ENCODE measurements at regions of chr1 and their contacts with region 1.

Region 1: GRCh38 chr1:10591010-10591409 is 116.3 kb downstream of the PEX14 start:
- DNase-seq: no peak
- H3K4me3 ChIP-seq: no peak overlapping the region
- H3K27ac ChIP-seq: no peak overlapping the region
- H3K4me1 ChIP-seq: peaks cover 0 to 26% (median 16%) of the 10 kb centered on the region in 4 donors
- H3K27me3 ChIP-seq: no peaks in the 10 kb centered on the region
- CTCF ChIP-seq: no peak
- EP300 ChIP-seq: no peak
- POLR2A ChIP-seq: no peak

Region 2: GRCh38 chr1:10540277-10541005 is 50.6 kb before region 1 on chr1:
- intact Hi-C with region 1: loop called (anchors 5 kb)
- DNase-seq: peak; percentile 73
- H3K4me3 ChIP-seq: no peak overlapping the region
- H3K27ac ChIP-seq: peak overlapping the region; percentile 50 to 77 (median 64)
- H3K4me1 ChIP-seq: peaks cover 0 to 31% (median 24%) of the 10 kb centered on the region in 4 donors
- H3K27me3 ChIP-seq: no peaks in the 10 kb centered on the region
- CTCF ChIP-seq: no peak
- EP300 ChIP-seq: no peak
- POLR2A ChIP-seq: no peak

Region 3: DNA sequence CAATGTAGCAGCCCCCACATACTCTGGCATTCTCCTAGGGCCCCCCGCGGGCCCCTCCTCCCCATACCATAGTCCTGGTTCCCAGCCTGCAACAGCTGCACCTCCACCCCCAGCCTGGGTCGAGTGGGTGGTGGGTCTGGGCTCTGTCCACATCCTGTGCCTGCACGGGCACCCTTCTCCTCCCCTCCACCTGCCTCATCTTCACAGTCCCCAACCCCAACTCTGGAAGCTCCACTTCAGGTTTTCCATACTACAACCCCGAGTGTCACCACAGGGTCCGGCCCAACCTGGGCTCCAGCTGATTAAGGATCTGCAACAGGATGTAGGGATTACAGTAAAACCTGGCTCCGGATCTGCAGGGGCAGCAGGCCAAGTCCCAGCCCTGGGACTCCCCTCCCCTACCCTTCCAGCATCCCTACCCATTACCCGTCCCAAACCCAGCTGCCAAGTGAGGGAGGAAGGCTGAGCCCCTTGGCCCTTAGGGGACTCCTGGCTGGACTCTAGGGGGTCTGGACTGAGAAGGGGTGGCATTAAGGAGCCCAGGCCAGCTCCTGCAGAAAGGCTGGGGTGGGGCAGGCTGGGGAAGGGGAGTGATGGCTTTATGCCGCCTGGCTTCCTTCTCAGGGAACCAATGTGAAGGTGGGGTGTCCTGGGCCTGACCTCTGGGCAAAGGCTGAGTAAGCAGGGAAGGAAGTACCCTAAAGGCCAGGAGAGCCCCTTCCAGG is 88.6 kb after region 1 on chr1:
- intact Hi-C with region 1: no loop called
- DNase-seq: no peak
- H3K4me3 ChIP-seq: peak overlapping the region in 3 of 4 donors; percentile 6 to 13 (median 13)
- H3K27ac ChIP-seq: peak overlapping the region; percentile 87 to 98 (median 96)
- H3K4me1 ChIP-seq: peaks cover 4 to 100% (median 100%) of the 10 kb centered on the region in 4 donors
- H3K27me3 ChIP-seq: no peaks in the 10 kb centered on the region
- CTCF ChIP-seq: no peak
- EP300 ChIP-seq: no peak
- POLR2A ChIP-seq: no peak

Region 4: GRCh38 chr1:10724948-10725847 is 134.2 kb after region 1 on chr1:
- intact Hi-C with region 1: no loop called
- DNase-seq: peak; percentile 84
- H3K4me3 ChIP-seq: no peak overlapping the region
- H3K27ac ChIP-seq: peak overlapping the region; percentile 66 to 90 (median 84)
- H3K4me1 ChIP-seq: peaks cover 0 to 58% (median 55%) of the 10 kb centered on the region in 4 donors
- H3K27me3 ChIP-seq: no peaks in the 10 kb centered on the region
- CTCF ChIP-seq: no peak
- EP300 ChIP-seq: peak in 1 of 4 donors; percentile 1
- POLR2A ChIP-seq: no peak